Calu3 (cell line): ENCODE measurements at regions of chr3 and their contacts with region 1.

Region 1: DNA sequence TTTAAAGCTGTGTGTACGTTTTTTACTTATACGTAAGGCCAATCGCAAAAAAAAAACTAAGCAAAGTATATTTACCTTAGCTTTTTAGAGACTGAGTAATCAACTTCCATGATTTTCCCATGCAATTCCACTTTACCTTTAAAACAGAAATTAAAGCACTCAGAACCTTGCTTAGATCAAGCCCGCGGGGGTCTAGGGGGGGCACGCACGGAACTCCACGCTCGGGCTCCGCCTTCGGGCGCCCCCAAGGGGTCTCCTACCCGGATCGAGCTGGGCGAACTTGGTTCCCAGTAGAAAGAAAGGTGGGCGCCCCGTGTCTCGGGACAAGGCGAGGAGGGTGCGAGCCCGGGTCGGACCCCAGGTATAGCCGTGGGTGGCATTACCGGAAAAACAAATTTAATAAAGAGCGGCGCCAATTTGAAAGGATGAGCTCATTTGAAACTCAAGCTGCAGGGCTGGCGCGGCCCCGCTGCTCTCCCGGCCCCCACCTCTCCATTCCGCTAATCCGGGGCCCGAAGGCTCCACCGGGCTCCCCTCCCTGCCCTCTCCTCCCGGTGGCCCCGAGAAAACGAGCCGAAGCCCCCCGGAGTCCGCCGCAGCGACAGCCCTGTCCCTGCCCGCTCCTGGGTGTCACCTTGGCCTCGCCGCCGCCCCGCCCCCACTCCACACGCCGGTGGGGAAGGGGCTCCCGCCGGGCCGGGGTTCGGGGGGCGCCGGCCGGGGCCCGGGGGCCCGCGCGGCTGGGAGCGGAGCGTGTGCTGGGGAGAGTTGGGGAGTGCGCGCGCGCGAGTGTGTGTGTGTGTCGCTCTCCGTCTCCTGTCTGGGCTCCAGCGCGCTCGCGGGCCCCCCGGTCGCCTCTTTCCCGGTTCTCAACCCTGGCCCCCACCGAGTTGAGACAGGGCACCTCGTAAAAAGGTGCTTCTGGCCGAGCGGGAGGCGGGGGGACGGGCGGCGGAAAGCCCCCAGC is 1.5 kb downstream of the IGF2BP2 start:
- DNase-seq: peak; percentile 56
- H3K4me3 Mint-ChIP-seq: peak overlapping the region; percentile 75
- H3K27ac Mint-ChIP-seq: peak overlapping the region; percentile 98
- H3K4me1 Mint-ChIP-seq: peaks cover 47% of the 10 kb centered on the region
- H3K27me3 Mint-ChIP-seq: no peaks in the 10 kb centered on the region
- CTCF ChIP-seq: no peak

Region 2: GRCh38 chr3:184428561-184429175 is 1394.7 kb before region 1 on chr3:
- CTCF ChIA-PET with region 1: no interaction called
- intact Hi-C with region 1: no loop called
- DNase-seq: no peak
- H3K4me3 Mint-ChIP-seq: no peak overlapping the region
- H3K27ac Mint-ChIP-seq: no peak overlapping the region
- H3K4me1 Mint-ChIP-seq: no peaks in the 10 kb centered on the region
- H3K27me3 Mint-ChIP-seq: peaks cover 53% of the 10 kb centered on the region
- CTCF ChIP-seq: no peak

Region 3: DNA sequence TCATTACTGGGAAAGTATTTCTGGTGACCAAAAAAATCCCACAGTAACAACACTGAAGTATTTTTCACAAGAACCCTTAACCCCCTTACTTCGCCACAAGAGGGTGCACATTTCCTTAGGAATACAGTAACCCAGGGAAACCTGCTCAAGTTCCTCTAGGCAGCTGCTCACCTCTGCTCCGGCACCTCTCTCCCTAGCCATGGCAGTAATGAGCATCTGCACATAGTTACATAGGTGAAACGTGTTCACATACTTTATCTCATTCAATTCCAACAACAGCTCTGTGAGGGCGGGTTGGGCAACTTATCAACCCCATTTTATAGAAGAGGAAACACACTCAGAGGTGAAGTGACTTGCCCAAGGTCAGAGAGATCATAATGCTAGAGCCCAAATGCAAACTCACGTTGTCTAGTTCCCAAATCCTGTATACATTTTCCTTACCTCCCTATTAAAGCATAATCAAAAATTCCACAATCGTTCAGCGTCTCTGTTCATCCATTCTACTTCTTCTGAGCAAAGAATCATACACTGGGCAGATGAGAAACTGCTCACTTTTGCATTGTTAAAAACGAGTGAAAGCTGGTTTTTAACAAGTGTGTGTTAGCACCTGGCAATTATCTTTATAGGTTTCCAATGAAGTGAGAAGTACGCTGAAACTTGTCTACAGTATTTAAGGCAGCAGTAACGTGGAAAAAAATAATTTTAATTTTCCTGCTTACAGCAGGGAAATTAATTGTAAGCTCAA is 89.2 kb before region 1 on chr3:
- CTCF ChIA-PET with region 1: interaction called, 3 read pairs
- intact Hi-C with region 1: loop called (anchors 2 kb)
- DNase-seq: peak; percentile 82
- H3K4me3 Mint-ChIP-seq: no peak overlapping the region
- H3K27ac Mint-ChIP-seq: peak overlapping the region; percentile 28
- H3K4me1 Mint-ChIP-seq: peaks cover 52% of the 10 kb centered on the region
- H3K27me3 Mint-ChIP-seq: no peaks in the 10 kb centered on the region
- CTCF ChIP-seq: peak; percentile 92

Region 4: GRCh38 chr3:185789891-185790830 is 33.2 kb before region 1 on chr3:
- CTCF ChIA-PET with region 1: interaction called, 12 read pairs
- intact Hi-C with region 1: no loop called
- DNase-seq: peak; percentile 54
- H3K4me3 Mint-ChIP-seq: peak overlapping the region; percentile 23
- H3K27ac Mint-ChIP-seq: peak overlapping the region; percentile 68
- H3K4me1 Mint-ChIP-seq: peaks cover 74% of the 10 kb centered on the region
- H3K27me3 Mint-ChIP-seq: no peaks in the 10 kb centered on the region
- CTCF ChIP-seq: no peak

Region 5: GRCh38 chr3:185843126-185843525 is 19.8 kb after region 1 on chr3:
- CTCF ChIA-PET with region 1: no interaction called
- intact Hi-C with region 1: no loop called
- DNase-seq: no peak
- H3K4me3 Mint-ChIP-seq: no peak overlapping the region
- H3K27ac Mint-ChIP-seq: no peak overlapping the region
- H3K4me1 Mint-ChIP-seq: no peaks in the 10 kb centered on the region
- H3K27me3 Mint-ChIP-seq: peaks cover 17% of the 10 kb centered on the region
- CTCF ChIP-seq: no peak

Region 6: DNA sequence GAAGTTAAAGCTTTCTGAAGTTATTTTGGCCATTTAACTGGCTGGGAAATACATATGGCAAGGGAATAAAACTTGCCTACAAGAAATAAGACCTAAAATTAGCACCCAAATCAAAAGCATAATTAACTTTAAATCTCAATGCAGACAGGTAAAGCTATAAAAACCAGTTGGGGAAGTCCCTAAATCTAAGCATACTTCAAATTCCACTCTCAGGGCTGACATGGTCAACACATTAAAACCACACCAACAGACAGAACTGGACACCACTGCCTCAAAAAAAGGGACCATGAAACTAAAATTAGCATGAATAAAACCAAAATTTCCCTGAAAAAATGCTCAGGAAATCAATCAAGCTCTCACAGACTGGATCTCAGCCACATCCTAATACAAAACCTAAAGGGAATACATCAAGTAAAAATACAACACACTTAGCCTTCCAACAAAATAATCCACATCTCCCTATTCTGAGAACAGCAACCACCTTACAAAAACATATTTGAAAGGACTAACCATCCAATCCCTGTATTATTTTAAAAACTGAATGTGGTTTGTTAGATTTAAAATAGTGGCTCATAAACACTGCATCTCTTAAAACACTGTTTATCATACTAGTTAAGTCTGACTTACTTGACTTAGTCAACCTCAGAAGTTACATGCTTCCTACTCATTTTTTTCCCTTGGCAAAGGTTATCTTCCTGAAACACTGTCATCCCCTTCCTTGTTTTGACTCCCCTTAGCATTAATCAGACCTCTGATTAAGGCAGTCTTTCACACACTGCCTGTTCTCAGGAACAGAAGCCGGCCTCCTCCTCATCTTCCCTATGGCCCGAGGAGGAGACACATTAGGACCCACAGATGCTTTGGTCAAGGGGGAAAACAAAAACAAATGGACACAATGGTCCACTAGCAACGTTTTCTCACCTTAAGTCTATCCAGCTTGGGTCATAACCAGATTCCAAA is 106.1 kb after region 1 on chr3:
- CTCF ChIA-PET with region 1: interaction called, 3 read pairs
- intact Hi-C with region 1: loop called (anchors 2 kb)
- DNase-seq: no peak
- H3K4me3 Mint-ChIP-seq: peak overlapping the region; percentile 95
- H3K27ac Mint-ChIP-seq: peak overlapping the region; percentile 41
- H3K4me1 Mint-ChIP-seq: peaks cover 89% of the 10 kb centered on the region
- H3K27me3 Mint-ChIP-seq: no peaks in the 10 kb centered on the region
- CTCF ChIP-seq: no peak